ENCODE measurements at regions of chr6 and their contacts with region 1.

Region 1: GRCh38 chr6:31729515-31729978 is 448 bp upstream of the DDAH2 start:
- DNase-seq: peak; percentile 87
- H3K4me3 Mint-ChIP-seq: peak overlapping the region; percentile 88
- H3K27ac Mint-ChIP-seq: peak overlapping the region; percentile 69
- H3K4me1 Mint-ChIP-seq: peaks cover 77% of the 10 kb centered on the region
- H3K27me3 Mint-ChIP-seq: no peaks in the 10 kb centered on the region

Region 2: GRCh38 chr6:31739639-31740396 is 10.3 kb after region 1 on chr6 and contains the start of gene MSH5:
- CTCF ChIA-PET with region 1: interaction called, 16 read pairs
- DNase-seq: peak; percentile 98
- H3K4me3 Mint-ChIP-seq: peak within 1 kb of the TSS; percentile 100
- H3K27ac Mint-ChIP-seq: peak within 1 kb of the TSS; percentile 93
- H3K4me1 Mint-ChIP-seq: peaks cover 52% of the 10 kb centered on the region
- H3K27me3 Mint-ChIP-seq: peaks cover 5% of the 10 kb centered on the region

Region 3: GRCh38 chr6:31752739-31753319 is 23.3 kb after region 1 on chr6:
- CTCF ChIA-PET with region 1: no interaction called
- DNase-seq: no peak
- H3K4me3 Mint-ChIP-seq: no peak overlapping the region
- H3K27ac Mint-ChIP-seq: no peak overlapping the region
- H3K4me1 Mint-ChIP-seq: no peaks in the 10 kb centered on the region
- H3K27me3 Mint-ChIP-seq: no peaks in the 10 kb centered on the region

Region 4: GRCh38 chr6:31769684-31770371 is 40.3 kb after region 1 on chr6:
- CTCF ChIA-PET with region 1: interaction called, 23 read pairs
- DNase-seq: peak; percentile 86
- H3K4me3 Mint-ChIP-seq: no peak overlapping the region
- H3K27ac Mint-ChIP-seq: peak overlapping the region; percentile 61
- H3K4me1 Mint-ChIP-seq: peaks cover 52% of the 10 kb centered on the region
- H3K27me3 Mint-ChIP-seq: no peaks in the 10 kb centered on the region

Region 5: GRCh38 chr6:31829633-31830283 is 100.2 kb after region 1 on chr6:
- CTCF ChIA-PET with region 1: interaction called, 13 read pairs
- DNase-seq: no peak
- H3K4me3 Mint-ChIP-seq: peak overlapping the region; percentile 98
- H3K27ac Mint-ChIP-seq: peak overlapping the region; percentile 93
- H3K4me1 Mint-ChIP-seq: peaks cover 48% of the 10 kb centered on the region
- H3K27me3 Mint-ChIP-seq: no peaks in the 10 kb centered on the region

Measured in activated naive CD4-positive, alpha-beta T cell treated with anti-CD3 and anti-CD28 coated beads, Interleukin-2, amount 10 ng/mL, durations not matched to agents 7 days and 5 days (primary cell).